HCT116 (cell line): ENCODE measurements at regions of chr11 and their contacts with region 1.

Region 1: DNA sequence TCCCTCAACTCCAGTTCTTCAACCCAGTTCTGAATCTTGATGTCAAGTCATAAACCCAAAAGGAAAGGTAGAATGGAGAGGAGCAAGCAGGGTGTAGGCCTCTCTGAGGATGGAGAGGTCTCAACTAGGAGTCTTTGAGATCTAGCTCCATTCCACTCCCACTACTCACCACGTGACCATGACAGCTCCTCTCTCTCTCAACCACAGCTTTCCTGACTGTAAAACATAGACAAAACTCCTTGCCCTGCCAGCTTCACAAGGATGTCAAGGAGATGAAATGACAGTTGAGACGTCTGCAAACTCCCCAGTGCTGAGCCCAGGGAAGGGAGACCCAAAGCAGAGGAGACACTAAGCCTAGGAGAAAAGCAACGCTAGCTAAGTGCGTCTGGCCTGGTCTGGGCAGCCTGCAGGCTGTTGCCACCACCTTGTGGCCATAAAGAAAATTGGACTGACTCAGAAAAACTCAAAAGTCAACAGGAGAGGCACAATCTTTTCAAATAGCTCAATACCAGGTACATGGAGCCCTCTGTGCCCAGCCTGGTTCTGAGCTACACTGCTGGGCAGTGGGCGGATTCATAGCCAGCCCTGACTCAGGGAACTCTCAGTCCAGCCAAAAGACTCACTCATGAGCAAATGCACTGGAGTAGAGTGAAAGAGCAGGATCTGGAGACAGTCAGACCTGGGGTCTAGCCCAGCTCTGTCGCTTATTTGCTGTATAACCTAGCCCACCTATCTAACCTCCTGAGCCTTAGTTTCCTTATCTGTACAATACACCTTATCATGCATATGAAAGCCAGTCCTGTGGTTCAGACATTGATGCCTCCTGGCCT is 3.4 kb downstream of the CLPB start:
- DNase-seq: no peak
- ATAC-seq: peak; percentile 17; the same call in 1 of the 2 replicates
- H3K4me3 ChIP-seq: no peak overlapping the region
- H3K27ac ChIP-seq: no peak overlapping the region
- H3K4me1 ChIP-seq: peaks cover 0 to 6% of the 10 kb centered on the region in 2 experiments; a peak in 1 of 4 replicates
- H3K27me3 ChIP-seq: no peaks in the 10 kb centered on the region
- CTCF ChIP-seq: peak; percentile 70 to 85 (median 81)
- POLR2A ChIP-seq: no peak
- RAD21 ChIP-seq: peak; percentile 88

Region 2: GRCh38 chr11:72030472-72031045 is 400.4 kb before region 1 on chr11:
- CTCF ChIA-PET with region 1: interaction called, 30 read pairs
- POLR2A ChIA-PET with region 1: no interaction called
- RAD21 ChIA-PET with region 1: no interaction called
- intact Hi-C with region 1: loop called (anchors 5 kb)
- DNase-seq: no peak
- ATAC-seq: no peak
- H3K4me3 ChIP-seq: no peak overlapping the region
- H3K27ac ChIP-seq: no peak overlapping the region
- H3K4me1 ChIP-seq: peaks cover 0 to 2% of the 10 kb centered on the region in 2 experiments; a peak in 1 of 4 replicates
- H3K27me3 ChIP-seq: no peaks in the 10 kb centered on the region
- CTCF ChIP-seq: no peak
- POLR2A ChIP-seq: no peak
- RAD21 ChIP-seq: no peak

Region 3: DNA sequence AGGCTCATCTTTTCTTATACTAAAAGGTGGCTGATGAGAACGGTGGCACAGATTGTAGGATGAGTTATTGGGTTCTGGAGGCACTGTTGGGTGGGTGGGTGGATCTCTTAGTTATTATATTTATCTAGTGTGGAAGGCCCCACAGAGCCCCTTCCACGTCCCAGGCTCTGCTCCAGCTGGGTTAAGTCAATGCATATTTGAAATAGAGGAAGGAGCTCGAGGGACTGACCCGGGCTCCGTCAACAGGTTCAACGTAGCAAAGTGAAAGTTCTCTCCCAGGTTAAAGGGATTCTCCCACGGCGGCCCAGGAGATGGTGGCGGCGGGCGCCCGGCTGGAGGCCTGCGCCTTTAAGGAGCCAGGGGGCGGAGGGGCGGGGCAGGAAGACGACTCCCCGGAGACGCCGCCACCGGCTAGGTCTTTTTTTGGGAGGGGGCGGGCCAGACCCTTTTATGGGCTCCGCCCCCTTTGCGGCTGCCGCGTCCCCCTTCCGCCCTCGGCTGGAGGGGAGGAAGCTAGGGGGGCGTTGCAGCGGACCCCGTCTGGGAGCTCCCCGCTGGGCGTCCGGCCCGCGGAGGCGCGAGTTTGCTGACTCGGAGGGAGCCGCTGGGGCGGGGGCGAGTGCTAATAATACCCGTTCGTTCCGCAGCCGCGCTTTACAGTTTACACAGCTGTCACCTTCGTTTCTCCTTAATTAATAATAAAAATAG is 207.9 kb before region 1 on chr11:
- CTCF ChIA-PET with region 1: interaction called, 3 read pairs
- POLR2A ChIA-PET with region 1: no interaction called
- RAD21 ChIA-PET with region 1: no interaction called
- intact Hi-C with region 1: loop called (anchors 10 kb)
- DNase-seq: peak; percentile 76
- ATAC-seq: peak; percentile 81
- H3K4me3 ChIP-seq: peak overlapping the region; percentile 88 to 94
- H3K27ac ChIP-seq: peak overlapping the region; percentile 79
- H3K4me1 ChIP-seq: peaks cover 17 to 32% of the 10 kb centered on the region in 2 experiments
- H3K27me3 ChIP-seq: no peaks in the 10 kb centered on the region
- CTCF ChIP-seq: no peak
- POLR2A ChIP-seq: no peak
- RAD21 ChIP-seq: no peak

Region 4: DNA sequence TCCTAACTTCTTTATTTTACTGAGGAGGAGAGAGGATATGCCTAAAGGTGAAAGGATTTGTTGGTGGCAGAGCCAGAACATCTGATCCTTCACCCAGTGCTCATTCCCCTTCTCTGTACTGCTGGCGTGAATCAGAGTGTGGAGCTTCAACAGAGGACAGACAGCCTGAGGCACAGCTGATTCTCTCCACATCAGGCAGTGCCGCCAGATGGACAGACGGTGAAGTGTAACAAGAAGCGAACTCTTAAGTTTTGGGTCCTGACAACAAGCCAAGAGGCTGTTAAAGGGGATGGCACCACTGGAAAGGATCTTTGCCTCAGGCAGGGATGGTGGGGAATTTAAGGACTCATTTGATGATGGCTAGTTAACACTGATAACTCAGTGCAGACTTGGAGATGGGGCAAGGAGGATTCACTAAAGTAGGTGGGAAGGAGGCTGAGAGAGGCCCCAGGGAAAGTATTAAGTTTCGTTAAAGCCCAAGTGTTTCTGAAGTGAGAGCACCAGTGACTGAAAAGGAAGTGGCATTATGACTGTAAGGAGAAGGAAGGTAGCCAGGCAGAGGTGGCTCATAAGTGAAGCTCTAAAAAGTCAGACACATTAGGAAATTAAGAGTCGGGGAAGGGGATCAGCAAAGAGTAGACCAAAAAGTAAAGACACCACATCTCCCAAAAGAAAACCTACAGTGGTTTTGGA is 78.0 kb before region 1 on chr11:
- CTCF ChIA-PET with region 1: interaction called, 10 read pairs
- POLR2A ChIA-PET with region 1: no interaction called
- RAD21 ChIA-PET with region 1: interaction called, 4 read pairs
- intact Hi-C with region 1: loop called (anchors 5 kb)
- DNase-seq: no peak
- ATAC-seq: no peak
- H3K4me3 ChIP-seq: no peak overlapping the region
- H3K27ac ChIP-seq: no peak overlapping the region
- H3K4me1 ChIP-seq: peaks cover 0 to 9% of the 10 kb centered on the region in 2 experiments; a peak in 2 of 4 replicates
- H3K27me3 ChIP-seq: no peaks in the 10 kb centered on the region
- CTCF ChIP-seq: no peak; a peak in 1 of 6 replicates
- POLR2A ChIP-seq: no peak
- RAD21 ChIP-seq: no peak

Region 5: GRCh38 chr11:72446902-72447769 is 16.2 kb after region 1 on chr11:
- CTCF ChIA-PET with region 1: interaction called, 17 read pairs
- POLR2A ChIA-PET with region 1: no interaction called
- RAD21 ChIA-PET with region 1: no interaction called
- intact Hi-C with region 1: no loop called
- DNase-seq: peak; percentile 69
- ATAC-seq: peak; percentile 87
- H3K4me3 ChIP-seq: no peak overlapping the region
- H3K27ac ChIP-seq: no peak overlapping the region
- H3K4me1 ChIP-seq: no peaks in the 10 kb centered on the region
- H3K27me3 ChIP-seq: no peaks in the 10 kb centered on the region
- CTCF ChIP-seq: peak; percentile 73 to 99 (median 79)
- POLR2A ChIP-seq: no peak
- RAD21 ChIP-seq: peak; percentile 82